Activated T-helper 1 cell treated with anti-CD3 and anti-CD28 coated beads, Interleukin-12 subunit alpha, Interleukin-12 subunit beta, Interleukin-2, Interleukin-4 antibody, amounts not matched to agents 30 ng/mL and 10 ng/mL and 1 ng/mL, durations not matched to agents 14 hours and 24 hours and 36 hours (primary cell): ENCODE measurements at regions of chr5 and their contacts with region 1.

Region 1: DNA sequence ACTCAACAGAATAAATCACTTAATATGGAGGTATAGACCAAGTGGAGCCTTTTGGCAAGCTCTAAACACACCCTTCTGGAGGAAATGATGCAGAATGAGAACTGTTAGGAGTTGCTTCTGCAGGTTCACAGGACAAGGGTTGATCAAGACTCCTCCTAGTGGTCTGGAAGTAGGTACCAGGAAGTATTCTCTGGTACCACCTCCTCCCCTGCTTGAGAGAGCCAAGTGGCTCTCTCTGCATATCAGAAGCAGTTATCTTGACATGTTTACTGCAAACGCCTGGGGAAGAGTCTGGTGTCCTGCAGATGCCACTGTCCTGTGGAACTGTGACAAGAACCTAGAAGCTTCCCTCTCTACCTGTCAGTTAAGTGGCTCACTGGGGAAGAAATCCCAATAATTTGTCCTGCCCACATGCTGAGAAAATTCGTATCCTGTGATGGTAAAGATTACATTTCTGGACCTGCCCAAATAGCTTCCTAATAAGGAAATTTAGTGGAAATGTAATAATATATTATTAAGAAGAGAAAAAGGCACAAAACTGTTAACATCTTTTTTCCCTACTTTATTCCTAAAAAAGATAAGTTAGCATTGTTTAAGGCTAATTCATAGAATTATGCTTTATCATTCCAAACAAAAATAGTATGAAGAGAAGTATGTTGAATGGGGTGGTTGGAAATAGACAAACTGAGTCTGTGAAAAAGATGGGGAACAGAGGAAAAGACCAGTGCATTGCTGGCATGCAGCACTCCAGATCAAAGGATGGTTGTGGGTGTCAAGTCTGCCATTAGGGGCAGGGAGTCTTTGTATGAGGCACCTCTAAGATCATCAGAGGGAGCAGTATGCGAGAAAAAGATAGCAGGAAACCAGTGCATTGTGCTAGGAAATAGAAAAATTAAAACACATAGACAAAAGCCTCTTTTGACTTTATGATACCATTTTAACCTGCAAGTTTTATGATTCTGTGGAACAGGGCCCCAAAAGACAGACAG is 118.8 kb downstream of the CDC42SE2 start:
- DNase-seq: peak; percentile 66
- H3K4me3 Mint-ChIP-seq: peak overlapping the region; percentile 61
- H3K27ac Mint-ChIP-seq: peak overlapping the region; percentile 99
- H3K4me1 Mint-ChIP-seq: peaks cover 93% of the 10 kb centered on the region
- H3K27me3 Mint-ChIP-seq: no peaks in the 10 kb centered on the region

Region 2: DNA sequence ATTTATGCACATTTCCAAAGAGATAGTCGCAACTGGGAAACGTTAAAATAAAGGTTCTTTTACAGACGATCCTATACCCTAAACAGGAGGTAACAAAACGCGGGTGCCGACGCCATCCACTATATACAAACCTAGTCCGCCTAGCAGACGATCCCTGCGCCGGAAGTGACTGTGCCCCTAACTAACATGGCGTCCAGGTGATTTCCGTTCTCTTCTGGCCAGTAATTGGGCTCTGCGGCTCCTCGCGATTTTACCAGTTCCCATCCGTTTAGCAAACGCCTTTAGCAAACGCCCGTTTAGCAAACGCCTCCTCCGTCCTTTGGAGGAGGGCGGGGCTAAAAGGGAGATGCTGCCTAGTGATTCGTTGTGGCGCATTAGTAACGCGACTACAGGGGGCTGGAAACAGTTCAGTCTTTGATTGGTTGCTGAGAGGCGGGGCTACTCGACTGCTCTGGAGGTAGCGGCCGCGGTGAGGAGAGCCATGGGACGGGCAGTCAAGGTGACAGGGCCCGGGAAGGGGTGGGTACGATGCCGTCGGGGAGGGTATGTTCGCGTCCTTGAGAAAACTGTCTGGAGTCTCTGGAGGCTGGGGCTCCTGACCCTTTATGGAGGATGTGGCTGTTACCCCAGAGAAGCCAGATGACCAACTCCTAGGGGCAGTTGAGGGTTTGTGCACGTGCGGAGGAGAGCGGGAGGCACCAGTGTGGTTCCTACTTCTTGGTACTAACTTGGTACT is 212.0 kb before region 1 on chr5 and contains the start of gene LYRM7:
- intact Hi-C with region 1: loop called (anchors 1 kb)
- DNase-seq: peak; percentile 96
- H3K4me3 Mint-ChIP-seq: peak within 1 kb of the TSS; percentile 99
- H3K27ac Mint-ChIP-seq: peak within 1 kb of the TSS; percentile 98
- H3K4me1 Mint-ChIP-seq: peaks cover 51% of the 10 kb centered on the region
- H3K27me3 Mint-ChIP-seq: no peaks in the 10 kb centered on the region
- total RNA-seq, gene LYRM7: 13.7 and 15.8 TPM in 2 replicates

Region 3: GRCh38 chr5:131186561-131187256 is 196.0 kb before region 1 on chr5:
- intact Hi-C with region 1: no loop called
- DNase-seq: no peak
- H3K4me3 Mint-ChIP-seq: no peak overlapping the region
- H3K27ac Mint-ChIP-seq: no peak overlapping the region
- H3K4me1 Mint-ChIP-seq: no peaks in the 10 kb centered on the region
- H3K27me3 Mint-ChIP-seq: no peaks in the 10 kb centered on the region

Region 4: GRCh38 chr5:131263648-131264450 is 118.9 kb before region 1 on chr5 and contains the start of gene CDC42SE2:
- intact Hi-C with region 1: loop called (anchors 1 kb)
- DNase-seq: peak; percentile 84
- H3K4me3 Mint-ChIP-seq: peak within 1 kb of the TSS; percentile 84
- H3K27ac Mint-ChIP-seq: peak within 1 kb of the TSS; percentile 92
- H3K4me1 Mint-ChIP-seq: peaks cover 48% of the 10 kb centered on the region
- H3K27me3 Mint-ChIP-seq: no peaks in the 10 kb centered on the region
- total RNA-seq, gene CDC42SE2: 100.0 and 103 TPM in 2 replicates

Region 5: DNA sequence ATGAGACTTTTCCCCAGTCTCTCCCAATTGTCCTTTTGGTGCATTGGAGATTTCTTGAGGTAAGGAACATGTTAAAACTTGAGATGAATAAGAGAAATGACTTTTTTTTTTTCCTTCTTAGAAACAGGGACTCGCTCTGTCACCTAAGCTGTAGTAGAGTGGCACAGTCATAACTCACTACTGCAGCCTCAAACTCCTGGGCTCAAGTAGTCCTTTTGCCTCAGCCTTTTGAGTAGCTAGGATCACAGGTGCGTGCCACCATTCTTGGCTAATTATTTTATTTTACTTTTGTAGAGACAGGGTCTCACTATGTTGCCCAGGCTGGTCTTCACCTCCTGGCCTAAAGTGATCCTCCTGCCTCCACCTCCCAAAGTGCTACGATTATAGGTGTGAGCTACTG is 93.0 kb before region 1 on chr5:
- intact Hi-C with region 1: loop called (anchors 2 kb)
- DNase-seq: no peak
- H3K4me3 Mint-ChIP-seq: peak overlapping the region; percentile 77
- H3K27ac Mint-ChIP-seq: peak overlapping the region; percentile 96
- H3K4me1 Mint-ChIP-seq: peaks cover 49% of the 10 kb centered on the region
- H3K27me3 Mint-ChIP-seq: no peaks in the 10 kb centered on the region

Region 6: DNA sequence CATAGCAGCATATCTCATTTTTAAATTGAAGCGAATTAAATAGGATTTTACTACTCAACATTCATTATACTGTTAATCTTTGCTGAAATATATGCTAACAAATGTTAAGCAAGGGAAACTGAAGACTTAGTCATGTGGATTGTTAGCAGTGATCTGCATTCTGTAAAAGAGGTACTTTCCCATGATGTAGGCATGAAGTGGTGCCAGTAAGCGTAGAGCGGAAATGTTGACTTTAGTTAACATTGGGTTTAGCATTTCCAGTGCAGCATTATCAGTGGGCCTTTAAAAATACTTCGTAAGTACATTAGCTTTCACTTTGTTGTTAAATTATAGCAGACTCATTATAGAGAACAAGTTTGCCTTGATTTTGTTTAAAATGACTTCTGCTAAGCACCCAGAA is 11.4 kb after region 1 on chr5:
- intact Hi-C with region 1: loop called (anchors 1 kb)
- DNase-seq: peak; percentile 56
- H3K4me3 Mint-ChIP-seq: peak overlapping the region; percentile 81
- H3K27ac Mint-ChIP-seq: peak overlapping the region; percentile 95
- H3K4me1 Mint-ChIP-seq: peaks cover 84% of the 10 kb centered on the region
- H3K27me3 Mint-ChIP-seq: no peaks in the 10 kb centered on the region

Region 7: GRCh38 chr5:131581702-131582101 is 199.0 kb after region 1 on chr5:
- intact Hi-C with region 1: no loop called
- DNase-seq: no peak
- H3K4me3 Mint-ChIP-seq: no peak overlapping the region
- H3K27ac Mint-ChIP-seq: no peak overlapping the region
- H3K4me1 Mint-ChIP-seq: peaks cover 32% of the 10 kb centered on the region
- H3K27me3 Mint-ChIP-seq: no peaks in the 10 kb centered on the region

Region 8: GRCh38 chr5:131619102-131619501 is 236.4 kb after region 1 on chr5:
- intact Hi-C with region 1: no loop called
- DNase-seq: no peak
- H3K4me3 Mint-ChIP-seq: no peak overlapping the region
- H3K27ac Mint-ChIP-seq: no peak overlapping the region
- H3K4me1 Mint-ChIP-seq: peaks cover 32% of the 10 kb centered on the region
- H3K27me3 Mint-ChIP-seq: no peaks in the 10 kb centered on the region

Region 9: DNA sequence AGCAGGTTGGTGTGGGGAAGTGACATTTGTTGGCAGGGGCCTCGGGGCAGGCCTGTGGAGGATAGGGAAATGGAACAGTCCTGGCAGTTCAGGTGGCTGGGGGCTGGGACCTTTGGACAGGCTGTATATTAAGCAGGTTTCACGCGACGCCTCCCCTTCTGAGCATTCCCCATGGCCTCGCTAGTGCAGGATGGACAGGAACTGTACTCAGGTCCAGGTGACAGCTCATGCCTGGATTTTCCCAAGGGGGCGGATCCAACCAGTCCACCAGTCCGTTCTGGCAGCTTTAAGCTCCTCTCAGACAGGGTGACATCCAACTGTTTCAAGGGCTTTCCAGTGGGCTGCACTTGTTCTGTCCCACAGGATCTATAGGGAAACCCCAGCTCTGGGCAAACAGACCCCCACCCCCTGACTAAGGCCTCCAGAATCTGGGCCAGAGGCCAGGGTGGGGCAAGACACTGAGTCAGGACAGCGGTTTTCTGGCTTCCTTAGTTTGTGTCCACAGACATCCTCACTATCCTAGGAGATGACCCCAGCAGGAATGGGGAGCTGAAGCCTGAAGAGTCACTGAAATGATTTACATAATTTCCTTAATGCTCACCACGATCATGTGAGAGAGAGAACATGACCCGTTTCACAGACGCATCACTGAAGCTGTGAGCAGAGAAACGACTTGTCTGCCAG is 711.8 kb after region 1 on chr5:
- intact Hi-C with region 1: loop called (anchors 10 kb)
- DNase-seq: no peak
- H3K4me3 Mint-ChIP-seq: peak overlapping the region; percentile 8
- H3K27ac Mint-ChIP-seq: peak overlapping the region; percentile 90
- H3K4me1 Mint-ChIP-seq: peaks cover 80% of the 10 kb centered on the region
- H3K27me3 Mint-ChIP-seq: no peaks in the 10 kb centered on the region